ENCODE measurements at regions of chr15 and their contacts with region 1.

Region 1: DNA sequence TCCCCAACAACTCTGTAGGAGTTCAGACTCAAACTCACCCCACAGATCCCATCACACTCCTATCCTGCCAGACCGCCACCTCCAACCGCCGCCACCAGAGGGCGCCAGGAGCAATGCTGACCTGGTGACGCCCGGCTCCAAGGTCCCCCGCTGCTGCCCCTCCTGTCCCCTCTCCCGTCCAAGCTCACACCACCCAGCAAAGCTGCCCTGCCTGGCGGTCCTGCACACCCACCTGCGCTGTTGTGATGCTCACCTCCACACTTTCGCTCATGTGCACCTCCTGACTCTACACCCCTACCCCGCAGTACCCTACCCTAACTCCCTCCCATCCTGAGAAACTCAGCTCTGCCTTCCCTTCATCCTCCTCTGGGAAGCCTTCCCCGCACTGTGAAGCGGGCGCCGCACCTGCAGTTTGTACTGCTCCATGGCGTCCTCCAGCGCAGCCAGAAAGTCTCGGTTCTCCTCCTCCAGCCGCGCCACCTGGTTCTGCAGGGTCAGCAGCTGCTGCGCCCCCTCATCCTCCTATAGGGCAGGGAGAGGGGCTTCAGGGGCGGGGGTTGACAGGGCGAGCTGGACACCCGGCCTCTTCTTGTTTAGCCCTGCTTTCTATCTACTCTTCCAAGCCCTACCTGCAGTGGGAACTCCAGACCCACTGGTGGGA is 7.9 kb downstream of the KIF7 start:
- H3K4me3 ChIP-seq: no peak overlapping the region
- H3K27ac ChIP-seq: no peak overlapping the region
- H3K4me1 ChIP-seq: no peaks in the 10 kb centered on the region
- CTCF ChIP-seq: peak; percentile 95

Region 2: DNA sequence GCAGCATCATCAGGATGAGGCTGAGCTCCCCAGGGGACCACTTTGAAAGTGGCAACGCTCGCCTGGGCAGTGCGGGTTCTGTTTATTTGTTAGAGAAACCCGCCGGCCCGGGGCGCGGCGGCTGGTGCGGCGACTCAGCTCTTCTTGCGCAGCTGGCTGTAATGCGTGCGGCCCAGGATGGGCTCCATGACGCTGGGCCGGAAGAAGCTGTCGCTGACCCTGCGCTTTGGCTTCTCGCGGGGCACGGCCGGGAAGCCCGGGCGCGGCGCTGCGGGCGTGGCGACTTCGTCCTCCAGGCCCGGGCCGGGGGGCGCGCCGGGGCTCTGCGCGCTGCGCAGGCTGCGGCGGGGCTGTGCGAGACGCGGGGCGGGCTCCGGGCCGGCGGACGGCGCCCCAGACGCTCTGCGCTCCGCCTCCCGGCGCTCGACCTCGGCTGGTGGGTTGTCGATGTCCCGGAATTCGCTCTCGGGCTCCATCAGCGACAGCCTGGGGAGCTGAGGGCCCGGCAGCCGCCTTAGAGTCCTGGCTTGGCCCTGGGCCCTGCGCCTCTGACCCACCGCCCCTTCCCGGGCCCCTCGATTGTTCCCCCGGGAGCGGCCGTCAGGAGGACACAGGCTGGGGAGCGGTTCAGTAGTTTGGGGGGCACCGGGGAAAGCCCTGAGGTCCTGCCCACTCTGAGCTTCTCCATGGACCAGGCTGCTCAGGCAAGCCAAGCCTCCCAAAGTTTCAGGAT is 18.3 kb after region 1 on chr15:
- CTCF ChIA-PET with region 1: interaction called, 36 read pairs
- POLR2A ChIA-PET with region 1: no interaction called
- H3K4me3 ChIP-seq: peak overlapping the region; percentile 11
- H3K27ac ChIP-seq: peak overlapping the region; percentile 21; the same call in 1 of the 2 replicates
- H3K4me1 ChIP-seq: no peaks in the 10 kb centered on the region
- CTCF ChIP-seq: no peak

Measured in HEK293 (cell line).